Sigmoid colon (tissue), 7 donors: ENCODE measurements at regions of chr15 and their contacts with region 1.

Region 1: DNA sequence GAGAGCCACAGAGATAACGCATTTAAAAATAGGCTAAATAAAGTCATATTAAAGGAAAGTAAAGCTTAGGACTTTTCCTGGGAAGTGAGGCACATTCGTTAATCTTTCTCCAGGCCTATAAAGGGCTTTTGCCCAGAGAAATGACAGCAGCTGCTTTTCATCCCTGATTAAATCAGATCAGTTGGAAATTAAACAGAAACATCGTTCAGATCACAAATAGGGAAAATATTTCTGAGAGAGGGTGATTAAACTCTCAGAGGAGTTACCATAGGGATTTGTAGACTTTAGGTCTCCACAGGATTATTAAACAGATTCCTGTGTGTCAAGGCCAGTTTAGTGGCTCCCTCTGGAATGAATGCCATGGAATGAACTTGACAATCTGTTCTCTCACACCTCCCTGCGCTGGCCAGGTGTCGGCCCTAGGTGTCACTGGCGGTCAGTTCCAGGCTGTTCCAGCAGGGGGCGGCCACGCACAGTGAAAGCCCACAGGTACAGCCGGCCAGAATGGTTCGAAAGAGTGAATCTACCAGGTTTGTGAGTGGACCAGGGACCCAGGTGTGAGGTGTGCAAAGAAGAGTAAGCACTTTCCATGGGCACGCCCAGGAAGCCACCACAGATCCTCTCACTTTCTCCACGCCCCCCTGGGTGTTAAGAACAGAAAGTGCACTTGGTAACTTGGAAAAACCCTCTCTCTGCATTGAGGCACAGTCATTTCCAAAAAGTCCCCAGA is 253.0 kb upstream of the RASGRP1 start:
- DNase-seq: peak; percentile 89
- H3K4me3 ChIP-seq: no peak overlapping the region
- H3K27ac ChIP-seq: peak overlapping the region in 1 of 4 donors; percentile 35
- H3K4me1 ChIP-seq: peaks cover 0 to 12% (median 6%) of the 10 kb centered on the region in 4 donors
- H3K27me3 ChIP-seq: no peaks in the 10 kb centered on the region
- CTCF ChIP-seq: peak; percentile 98 to 100 (median 99)
- EP300 ChIP-seq: no peak
- POLR2A ChIP-seq: no peak

Region 2: DNA sequence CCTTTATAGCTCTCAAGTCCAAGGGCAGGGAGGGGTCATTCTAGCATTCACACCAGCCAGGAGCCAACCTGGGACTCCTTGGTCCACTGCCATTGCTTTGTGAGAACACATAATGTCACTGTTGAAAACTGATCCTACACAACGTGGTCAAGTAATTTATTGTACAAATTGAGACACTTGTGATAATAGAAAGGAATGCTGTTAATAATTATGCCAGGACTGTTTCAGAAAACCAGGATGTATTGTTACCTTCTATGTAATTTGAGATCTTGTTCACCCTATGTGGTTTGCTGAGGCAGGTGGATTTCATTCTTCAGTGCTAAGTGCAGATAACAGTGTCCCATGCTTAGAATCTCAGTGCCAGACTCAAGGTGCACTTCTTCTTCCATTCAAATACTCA is 849.8 kb before region 1 on chr15:
- intact Hi-C with region 1: no loop called
- DNase-seq: no peak
- H3K4me3 ChIP-seq: no peak overlapping the region
- H3K27ac ChIP-seq: no peak overlapping the region
- H3K4me1 ChIP-seq: no peaks in the 10 kb centered on the region
- H3K27me3 ChIP-seq: no peaks in the 10 kb centered on the region
- CTCF ChIP-seq: no peak
- EP300 ChIP-seq: no peak
- POLR2A ChIP-seq: no peak

Region 3: DNA sequence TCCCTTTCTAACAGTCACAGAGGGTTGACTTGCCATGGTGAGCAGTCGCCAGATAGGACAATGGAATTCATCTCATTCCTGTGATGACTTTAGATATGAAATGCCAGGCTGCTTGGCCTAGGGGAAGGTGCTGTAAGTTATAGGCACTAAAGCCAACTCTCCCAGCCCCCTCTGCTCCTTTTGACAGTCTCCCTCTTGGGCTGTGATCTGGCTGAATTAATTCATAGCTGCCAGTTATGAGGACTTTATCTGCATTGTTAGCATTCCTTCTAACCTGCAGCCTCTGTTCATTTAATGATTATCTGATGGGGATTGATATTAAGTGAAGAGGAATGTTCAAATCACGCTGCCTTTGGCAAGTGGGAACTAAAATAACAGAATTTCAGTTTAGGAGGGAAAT is 174.1 kb after region 1 on chr15:
- intact Hi-C with region 1: loop called (anchors 2 kb)
- DNase-seq: no peak
- H3K4me3 ChIP-seq: no peak overlapping the region
- H3K27ac ChIP-seq: no peak overlapping the region
- H3K4me1 ChIP-seq: peaks cover 0 to 32% (median 18%) of the 10 kb centered on the region in 4 donors
- H3K27me3 ChIP-seq: no peaks in the 10 kb centered on the region
- CTCF ChIP-seq: no peak
- EP300 ChIP-seq: no peak
- POLR2A ChIP-seq: no peak

Region 4: DNA sequence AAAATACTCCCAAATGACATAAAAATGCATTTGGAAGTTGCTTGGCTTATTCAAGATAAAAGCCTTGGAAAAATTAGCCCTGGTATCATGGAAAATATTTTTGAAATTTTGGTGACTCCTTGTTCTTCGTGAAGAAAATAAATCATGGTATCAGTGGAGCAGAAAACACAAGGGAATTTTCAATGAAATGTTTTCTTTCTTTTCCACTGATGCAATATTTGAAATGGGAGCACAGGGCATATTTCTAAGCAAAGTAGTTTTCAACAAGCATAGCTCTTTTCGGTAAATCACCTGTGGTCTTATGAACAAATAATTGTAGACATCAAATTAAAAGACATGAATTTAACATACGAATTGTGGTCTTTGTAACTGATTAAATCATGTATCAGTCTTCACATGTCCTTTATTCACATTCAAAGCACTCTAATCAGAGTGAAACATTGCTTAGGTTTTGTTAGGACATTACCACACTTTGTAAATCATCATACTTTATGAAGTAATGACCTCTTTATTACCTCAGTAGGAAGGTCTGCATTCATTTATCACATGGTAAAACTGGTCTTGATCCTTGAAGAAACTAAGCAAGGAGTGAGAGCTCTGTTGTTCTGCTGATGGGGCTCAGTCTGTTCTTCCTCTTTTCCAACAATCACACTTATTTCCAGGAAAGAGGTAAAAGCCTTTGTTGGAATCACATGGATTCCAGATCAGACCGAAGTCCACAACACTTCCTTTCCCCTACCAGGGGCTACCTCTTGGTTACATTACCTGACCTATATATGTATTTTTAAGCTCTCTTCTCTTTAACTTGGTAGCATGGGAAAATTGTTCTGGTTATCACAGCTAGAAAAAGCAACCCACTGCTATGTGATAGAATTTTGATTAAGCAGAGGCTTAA is 349.8 kb after region 1 on chr15:
- intact Hi-C with region 1: no loop called
- DNase-seq: no peak
- H3K4me3 ChIP-seq: no peak overlapping the region
- H3K27ac ChIP-seq: peak overlapping the region; percentile 4 to 64 (median 62)
- H3K4me1 ChIP-seq: peaks cover 0 to 36% (median 22%) of the 10 kb centered on the region in 4 donors
- H3K27me3 ChIP-seq: no peaks in the 10 kb centered on the region
- CTCF ChIP-seq: no peak
- EP300 ChIP-seq: no peak
- POLR2A ChIP-seq: no peak

Region 5: GRCh38 chr15:39465843-39466749 is 648.5 kb after region 1 on chr15:
- intact Hi-C with region 1: loop called (anchors 10 kb)
- DNase-seq: peak; percentile 84
- H3K4me3 ChIP-seq: no peak overlapping the region
- H3K27ac ChIP-seq: peak overlapping the region; percentile 53 to 76 (median 63)
- H3K4me1 ChIP-seq: peaks cover 0 to 12% (median 8%) of the 10 kb centered on the region in 4 donors
- H3K27me3 ChIP-seq: no peaks in the 10 kb centered on the region
- CTCF ChIP-seq: no peak
- EP300 ChIP-seq: no peak
- POLR2A ChIP-seq: no peak

Region 6: GRCh38 chr15:39756806-39757522 is 939.4 kb after region 1 on chr15:
- intact Hi-C with region 1: loop called (anchors 2 kb)
- DNase-seq: no peak
- H3K4me3 ChIP-seq: no peak overlapping the region
- H3K27ac ChIP-seq: no peak overlapping the region
- H3K4me1 ChIP-seq: no peaks in the 10 kb centered on the region
- H3K27me3 ChIP-seq: no peaks in the 10 kb centered on the region
- CTCF ChIP-seq: peak; percentile 27 to 88 (median 66)
- EP300 ChIP-seq: no peak
- POLR2A ChIP-seq: no peak